T-cell (primary cell): ENCODE measurements at regions of chr12 and their contacts with region 1.

Region 1: GRCh38 chr12:91663310-91663709 is 480.7 kb upstream of the DCN start:
- DNase-seq: no peak
- ATAC-seq: no peak
- H3K4me3 ChIP-seq: no peak overlapping the region
- H3K4me3 Mint-ChIP-seq: no peak overlapping the region
- H3K27ac ChIP-seq: no peak overlapping the region
- H3K27ac Mint-ChIP-seq: no peak overlapping the region
- H3K4me1 ChIP-seq: no peaks in the 10 kb centered on the region
- H3K4me1 Mint-ChIP-seq: peaks cover 9 to 22% (median 20%) of the 10 kb centered on the region in 3 donors
- H3K27me3 ChIP-seq: no peaks in the 10 kb centered on the region
- H3K27me3 Mint-ChIP-seq: no peaks in the 10 kb centered on the region

Region 2: DNA sequence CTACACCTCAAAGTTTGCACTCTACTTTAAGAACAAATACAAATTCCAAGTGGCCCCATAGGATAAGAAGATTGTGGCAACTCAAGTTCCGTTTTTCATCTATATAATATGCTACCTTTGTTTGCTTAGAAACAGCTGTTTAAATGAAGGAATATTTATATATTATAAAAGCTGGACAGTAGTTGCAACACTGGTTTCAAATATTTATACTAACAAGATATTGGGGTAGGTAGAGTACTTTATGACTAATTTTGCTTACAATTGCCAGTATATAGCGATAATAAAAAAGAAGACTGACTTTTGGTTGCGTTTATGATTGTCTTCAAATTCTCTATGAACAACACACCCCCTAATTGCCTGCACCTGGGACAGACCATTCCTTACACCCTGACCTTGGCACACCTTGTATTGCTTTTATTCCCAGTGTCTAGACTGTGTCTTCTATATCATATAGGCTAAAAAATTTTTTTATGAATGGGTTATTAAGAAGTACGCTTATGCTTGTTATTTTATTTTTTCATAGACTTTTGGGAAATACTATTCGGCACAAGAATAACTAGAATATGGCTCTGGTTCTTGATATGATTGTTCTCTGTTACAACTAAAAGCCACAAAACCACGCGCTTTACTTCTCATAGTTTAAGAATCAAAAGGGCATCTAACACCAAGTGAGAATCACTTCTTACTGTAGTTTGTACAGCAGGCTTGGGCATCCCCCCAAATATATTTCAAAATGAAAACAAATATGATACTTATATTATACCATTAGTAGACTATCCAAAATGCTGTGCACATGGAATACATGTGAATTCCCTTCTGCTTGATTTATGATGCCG is 25.3 kb before region 1 on chr12:
- CTCF ChIA-PET with region 1: no interaction called
- POLR2A ChIA-PET with region 1: no interaction called
- DNase-seq: no peak
- ATAC-seq: no peak
- H3K4me3 ChIP-seq: no peak overlapping the region
- H3K4me3 Mint-ChIP-seq: no peak overlapping the region
- H3K27ac ChIP-seq: no peak overlapping the region
- H3K27ac Mint-ChIP-seq: no peak overlapping the region
- H3K4me1 ChIP-seq: no peaks in the 10 kb centered on the region
- H3K4me1 Mint-ChIP-seq: no peaks in the 10 kb centered on the region
- H3K27me3 ChIP-seq: no peaks in the 10 kb centered on the region
- H3K27me3 Mint-ChIP-seq: no peaks in the 10 kb centered on the region

Region 3: DNA sequence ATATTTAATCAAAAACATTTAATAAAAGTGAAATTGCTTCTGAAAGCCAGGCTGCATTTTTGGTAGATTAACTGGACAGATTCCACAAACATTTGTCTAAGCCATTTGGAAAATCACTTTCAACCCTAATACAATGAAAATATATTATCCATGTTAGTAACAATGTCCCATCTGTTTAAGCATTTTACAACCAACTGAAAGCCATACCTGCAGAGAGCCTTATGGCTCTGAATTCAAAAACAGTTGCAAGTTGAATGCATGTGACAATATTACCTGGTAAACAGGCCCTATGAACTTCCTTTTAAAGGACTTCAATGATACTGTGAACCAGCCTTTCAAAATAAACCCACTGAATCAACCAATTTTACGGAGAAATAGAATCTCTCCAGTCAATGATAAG is 14.2 kb after region 1 on chr12:
- CTCF ChIA-PET with region 1: interaction called in 1 of 2 experiments, 3 read pairs
- POLR2A ChIA-PET with region 1: interaction called, 8 to 12 read pairs
- DNase-seq: no peak
- ATAC-seq: no peak
- H3K4me3 ChIP-seq: no peak overlapping the region
- H3K4me3 Mint-ChIP-seq: no peak overlapping the region
- H3K27ac ChIP-seq: no peak overlapping the region
- H3K27ac Mint-ChIP-seq: no peak overlapping the region
- H3K4me1 ChIP-seq: no peaks in the 10 kb centered on the region
- H3K4me1 Mint-ChIP-seq: peaks cover 5 to 9% (median 7%) of the 10 kb centered on the region in 3 donors
- H3K27me3 ChIP-seq: no peaks in the 10 kb centered on the region
- H3K27me3 Mint-ChIP-seq: no peaks in the 10 kb centered on the region

Region 4: DNA sequence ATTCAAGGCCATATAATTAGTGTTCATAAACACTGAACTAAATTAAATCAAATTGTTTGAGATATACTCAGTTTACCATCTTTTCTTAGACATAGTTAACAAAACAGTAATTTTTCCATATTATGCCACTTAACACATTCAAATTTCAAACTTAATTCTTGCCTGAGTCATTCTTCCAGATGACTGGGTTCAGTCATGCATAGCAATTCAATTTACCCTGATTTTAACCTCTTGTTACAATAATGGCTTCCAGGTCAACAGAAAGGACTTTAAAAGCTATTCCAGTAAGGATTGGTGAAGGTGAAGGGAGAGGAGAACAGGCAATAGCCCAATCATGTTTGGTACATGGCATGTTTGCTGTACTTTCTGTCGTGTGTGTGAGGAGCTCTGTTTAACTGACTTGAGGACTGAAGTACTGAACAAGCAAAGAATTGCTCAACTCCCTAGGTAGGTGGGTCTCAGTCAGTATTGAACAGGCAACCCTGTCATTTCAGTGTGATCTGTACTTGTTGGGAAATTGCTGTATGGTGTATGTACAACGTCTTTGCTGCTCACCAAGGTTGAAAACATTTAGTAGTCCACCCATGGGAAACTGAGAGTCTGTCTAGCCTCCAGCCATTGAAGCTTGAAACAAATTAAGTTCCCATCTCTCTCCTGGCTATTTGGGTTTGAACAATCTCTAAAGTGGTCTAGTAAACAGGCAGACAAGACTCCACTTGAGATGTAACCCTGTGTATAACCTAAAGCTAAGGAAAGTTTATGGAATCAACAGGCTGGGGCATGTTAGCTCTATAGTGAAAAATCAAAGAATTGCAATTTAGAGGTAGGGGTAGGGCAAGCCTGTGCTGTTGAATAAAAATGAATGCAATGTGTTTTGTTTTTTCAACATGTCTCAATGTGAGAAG is 155.2 kb after region 1 on chr12:
- CTCF ChIA-PET with region 1: no interaction called
- POLR2A ChIA-PET with region 1: no interaction called
- DNase-seq: no peak
- ATAC-seq: no peak
- H3K4me3 ChIP-seq: no peak overlapping the region
- H3K4me3 Mint-ChIP-seq: no peak overlapping the region
- H3K27ac ChIP-seq: no peak overlapping the region
- H3K27ac Mint-ChIP-seq: peak overlapping the region in 1 of 2 donors; percentile 0
- H3K4me1 ChIP-seq: peaks cover 0 to 2% of the 10 kb centered on the region in 2 experiments
- H3K4me1 Mint-ChIP-seq: peaks cover 3 to 19% (median 11%) of the 10 kb centered on the region in 3 donors
- H3K27me3 ChIP-seq: no peaks in the 10 kb centered on the region
- H3K27me3 Mint-ChIP-seq: no peaks in the 10 kb centered on the region